Posterior vena cava (tissue), 2 donors: ENCODE measurements at regions of chr19 and their contacts with region 1.

Region 1: GRCh38 chr19:29837448-29837981 is 25.7 kb downstream of the CCNE1 start:
- DNase-seq: peak; percentile 5

Region 2: DNA sequence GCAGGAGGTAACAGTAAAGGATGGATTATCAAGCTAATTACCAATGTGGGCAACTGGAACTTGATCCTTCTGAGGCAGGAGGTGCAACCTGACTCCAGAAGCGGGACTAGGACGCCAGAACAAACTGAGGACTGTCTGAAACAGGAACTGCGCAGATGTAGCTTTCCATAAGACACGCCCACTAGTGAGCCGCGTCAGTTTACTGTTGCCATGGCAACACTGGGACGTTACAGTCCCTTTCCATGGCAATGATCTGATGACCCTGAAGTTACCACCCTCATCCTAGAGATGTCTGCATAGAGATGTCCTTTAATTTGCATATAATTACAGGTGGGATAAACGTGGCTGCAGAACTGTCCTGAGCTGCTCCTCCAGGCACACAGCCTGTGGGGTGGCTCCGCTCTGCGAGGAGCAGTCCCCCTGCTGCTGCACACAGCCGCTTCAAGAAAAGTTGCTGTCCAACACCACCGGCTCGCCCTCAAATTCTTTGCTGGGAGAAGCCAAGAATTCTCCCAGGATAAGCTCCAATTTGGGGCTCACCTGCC is 1441.2 kb before region 1 on chr19:
- intact Hi-C with region 1: loop called in 1 of 2 experiments (anchors 5 kb)
- DNase-seq: no peak